ENCODE measurements at regions of chr17 and their contacts with region 1.

Region 1: DNA sequence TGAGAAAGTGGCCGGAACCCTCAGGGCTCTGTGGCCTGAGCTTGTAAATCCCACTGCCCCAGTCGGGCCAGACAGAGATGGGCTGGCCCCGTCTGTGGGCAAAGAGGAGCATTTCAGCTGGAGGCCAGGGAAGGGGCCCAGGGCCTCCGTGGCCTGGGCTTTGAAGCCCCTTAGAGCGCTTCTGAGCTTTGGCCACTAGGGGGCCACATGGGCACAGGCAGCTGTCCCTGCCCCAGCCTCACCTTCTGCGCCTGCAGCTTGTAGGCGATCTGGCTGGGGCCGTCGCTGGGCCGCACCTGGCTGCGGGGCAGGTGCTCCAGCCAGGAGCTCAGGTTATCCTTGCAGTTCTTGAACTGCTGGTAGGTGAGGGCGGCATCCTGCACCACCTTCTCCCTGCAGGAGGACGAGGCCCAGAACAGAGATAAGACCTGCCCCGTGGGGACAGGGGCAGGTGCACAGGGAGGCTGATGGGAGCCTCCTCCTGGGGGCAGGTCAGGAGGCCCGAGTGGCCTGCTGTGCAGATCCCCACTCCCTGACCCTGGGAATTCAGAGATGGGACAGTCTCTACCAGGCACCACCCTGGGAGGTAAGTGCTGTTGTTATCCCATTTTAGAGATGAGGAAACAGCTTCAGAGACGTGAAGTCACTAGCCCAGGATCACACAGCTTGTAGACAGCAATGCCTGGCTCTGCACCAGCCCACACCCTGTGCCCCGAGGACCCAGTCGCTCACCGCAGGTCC is 12.8 kb downstream of the EVPL start:
- DNase-seq: peak; percentile 88 to 92
- H3K4me3 ChIP-seq: no peak overlapping the region
- H3K4me3 Mint-ChIP-seq: no peak overlapping the region
- H3K27ac Mint-ChIP-seq: no peak overlapping the region
- H3K4me1 ChIP-seq: peaks cover 11% of the 10 kb centered on the region
- H3K4me1 Mint-ChIP-seq: peaks cover 12% of the 10 kb centered on the region
- H3K27me3 ChIP-seq: no peaks in the 10 kb centered on the region
- H3K27me3 Mint-ChIP-seq: no peaks in the 10 kb centered on the region
- CTCF ChIP-seq: peak; percentile 97

Region 2: GRCh38 chr17:75904749-75905521 is 109.4 kb before region 1 on chr17 and contains the start of gene MRPL38:
- CTCF ChIA-PET with region 1: interaction called, 6 read pairs
- POLR2A ChIA-PET with region 1: interaction called, 19 read pairs
- intact Hi-C with region 1: no loop called
- DNase-seq: peak; percentile 97 to 99
- H3K4me3 ChIP-seq: peak within 1 kb of the TSS; percentile 66
- H3K4me3 Mint-ChIP-seq: peak within 1 kb of the TSS; percentile 99
- H3K27ac Mint-ChIP-seq: peak within 1 kb of the TSS; percentile 92
- H3K4me1 ChIP-seq: peaks cover 22% of the 10 kb centered on the region
- H3K4me1 Mint-ChIP-seq: peaks cover 17% of the 10 kb centered on the region
- H3K27me3 ChIP-seq: no peaks in the 10 kb centered on the region
- H3K27me3 Mint-ChIP-seq: no peaks in the 10 kb centered on the region
- CTCF ChIP-seq: peak; percentile 95
- total RNA-seq, gene MRPL38: 157 and 163 TPM in 2 replicates

Region 3: GRCh38 chr17:76056835-76057234 is 42.5 kb after region 1 on chr17:
- CTCF ChIA-PET with region 1: interaction called, 10 read pairs
- POLR2A ChIA-PET with region 1: no interaction called
- intact Hi-C with region 1: loop called (anchors 1 kb)
- DNase-seq: peak in 1 of 2 experiments; percentile 61
- H3K4me3 ChIP-seq: no peak overlapping the region
- H3K4me3 Mint-ChIP-seq: no peak overlapping the region
- H3K27ac Mint-ChIP-seq: no peak overlapping the region
- H3K4me1 ChIP-seq: peaks cover 15% of the 10 kb centered on the region
- H3K4me1 Mint-ChIP-seq: peaks cover 9% of the 10 kb centered on the region
- H3K27me3 ChIP-seq: no peaks in the 10 kb centered on the region
- H3K27me3 Mint-ChIP-seq: no peaks in the 10 kb centered on the region
- CTCF ChIP-seq: peak; percentile 20 to 28

Region 4: DNA sequence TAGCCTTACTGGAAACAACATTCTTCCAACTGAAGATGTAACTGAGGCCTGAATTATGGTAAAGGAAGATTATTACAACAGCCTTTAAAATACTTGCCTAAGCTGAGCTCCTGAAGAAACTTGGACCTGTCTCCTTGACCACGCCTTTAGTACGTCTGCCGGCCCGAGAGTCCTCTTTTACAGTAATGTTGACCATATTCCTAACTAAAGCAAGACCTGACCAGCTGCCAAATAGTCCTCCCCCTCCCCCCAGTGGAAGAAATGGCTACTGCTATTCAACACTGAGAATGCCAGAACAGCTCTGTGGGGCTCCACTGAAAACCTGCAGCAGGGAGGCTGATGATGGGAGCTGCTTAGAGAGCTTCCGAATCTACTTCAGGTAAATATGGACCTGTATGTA is 139.3 kb after region 1 on chr17:
- CTCF ChIA-PET with region 1: interaction called, 12 read pairs
- POLR2A ChIA-PET with region 1: no interaction called
- intact Hi-C with region 1: loop called (anchors 2 kb)
- DNase-seq: peak; percentile 63 to 70
- H3K4me3 ChIP-seq: no peak overlapping the region
- H3K4me3 Mint-ChIP-seq: no peak overlapping the region
- H3K27ac Mint-ChIP-seq: no peak overlapping the region
- H3K4me1 ChIP-seq: no peaks in the 10 kb centered on the region
- H3K4me1 Mint-ChIP-seq: no peaks in the 10 kb centered on the region
- H3K27me3 ChIP-seq: no peaks in the 10 kb centered on the region
- H3K27me3 Mint-ChIP-seq: no peaks in the 10 kb centered on the region
- CTCF ChIP-seq: peak; percentile 64 to 66

Region 5: GRCh38 chr17:76278952-76279741 is 264.8 kb after region 1 on chr17:
- CTCF ChIA-PET with region 1: interaction called, 27 read pairs
- POLR2A ChIA-PET with region 1: no interaction called
- intact Hi-C with region 1: loop called (anchors 5 kb)
- DNase-seq: peak; percentile 87 to 94
- H3K4me3 ChIP-seq: no peak overlapping the region
- H3K4me3 Mint-ChIP-seq: no peak overlapping the region
- H3K27ac Mint-ChIP-seq: no peak overlapping the region
- H3K4me1 ChIP-seq: peaks cover 16% of the 10 kb centered on the region
- H3K4me1 Mint-ChIP-seq: peaks cover 5% of the 10 kb centered on the region
- H3K27me3 ChIP-seq: no peaks in the 10 kb centered on the region
- H3K27me3 Mint-ChIP-seq: no peaks in the 10 kb centered on the region
- CTCF ChIP-seq: peak; percentile 98